ENCODE measurements at regions of chr6 and their contacts with region 1.

Region 1: GRCh38 chr6:12011276-12012076 is 636 bp upstream of the HIVEP1 start:
- DNase-seq: peak; percentile 83 to 99 (median 94)
- ATAC-seq: peak; percentile 83
- H3K4me3 ChIP-seq: no peak overlapping the region
- H3K4me3 Mint-ChIP-seq: peak overlapping the region; percentile 91 to 99 (median 94)
- H3K27ac ChIP-seq: peak overlapping the region; percentile 73
- H3K27ac Mint-ChIP-seq: peak overlapping the region; percentile 97 to 100 (median 98)
- H3K4me1 ChIP-seq: peaks cover 14 to 26% of the 10 kb centered on the region in 2 donors
- H3K4me1 Mint-ChIP-seq: peaks cover 15 to 68% (median 58%) of the 10 kb centered on the region in 7 donors
- H3K27me3 ChIP-seq: no peaks in the 10 kb centered on the region
- H3K27me3 Mint-ChIP-seq: peaks cover 0 to 5% (median 0%) of the 10 kb centered on the region in 5 donors

Region 2: DNA sequence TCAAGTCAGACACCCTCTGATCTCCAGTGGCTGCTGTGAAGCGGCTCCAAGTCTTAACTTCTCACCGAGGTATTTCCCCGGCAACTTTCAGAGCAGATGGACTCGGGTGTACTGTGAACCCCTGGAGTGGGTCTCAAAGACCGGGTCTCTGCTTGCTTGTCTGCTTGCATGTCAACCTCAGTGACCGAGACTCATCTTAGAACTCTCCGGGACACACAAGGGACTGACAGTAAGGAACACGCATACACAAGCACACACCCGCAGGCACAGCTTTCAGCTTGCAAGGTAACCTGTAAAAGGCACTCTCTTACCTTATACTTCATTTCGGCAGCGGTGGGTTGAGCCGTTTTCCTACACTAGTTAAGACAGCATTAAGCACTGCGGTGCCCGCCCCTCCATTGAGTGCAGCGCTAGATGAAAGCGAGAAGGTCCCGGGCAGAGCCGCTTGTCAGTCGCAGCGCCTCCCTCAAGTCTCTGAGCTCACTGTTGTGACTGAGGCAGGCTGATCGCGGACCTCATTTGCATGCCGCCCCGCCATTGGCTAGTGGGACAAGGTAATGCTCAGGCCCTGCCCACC is 779.2 kb before region 1 on chr6 and contains the start of gene NEDD9:
- CTCF ChIA-PET with region 1: no interaction called
- POLR2A ChIA-PET with region 1: no interaction called
- intact Hi-C with region 1: loop called (anchors 1 kb)
- DNase-seq: peak; percentile 76 to 97 (median 90)
- ATAC-seq: peak; percentile 97
- H3K4me3 ChIP-seq: peak within 1 kb of the TSS; percentile 69
- H3K4me3 Mint-ChIP-seq: peak within 1 kb of the TSS; percentile 86 to 98 (median 94)
- H3K27ac ChIP-seq: peak within 1 kb of the TSS; percentile 76
- H3K27ac Mint-ChIP-seq: peak within 1 kb of the TSS; percentile 88 to 99 (median 98)
- H3K4me1 ChIP-seq: peaks cover 19 to 26% of the 10 kb centered on the region in 2 donors
- H3K4me1 Mint-ChIP-seq: peaks cover 32 to 78% (median 46%) of the 10 kb centered on the region in 7 donors
- H3K27me3 ChIP-seq: no peaks in the 10 kb centered on the region
- H3K27me3 Mint-ChIP-seq: no peaks in the 10 kb centered on the region
- total RNA-seq, gene NEDD9: 29.4 to 62.9 (median 40.2) TPM

Region 3: DNA sequence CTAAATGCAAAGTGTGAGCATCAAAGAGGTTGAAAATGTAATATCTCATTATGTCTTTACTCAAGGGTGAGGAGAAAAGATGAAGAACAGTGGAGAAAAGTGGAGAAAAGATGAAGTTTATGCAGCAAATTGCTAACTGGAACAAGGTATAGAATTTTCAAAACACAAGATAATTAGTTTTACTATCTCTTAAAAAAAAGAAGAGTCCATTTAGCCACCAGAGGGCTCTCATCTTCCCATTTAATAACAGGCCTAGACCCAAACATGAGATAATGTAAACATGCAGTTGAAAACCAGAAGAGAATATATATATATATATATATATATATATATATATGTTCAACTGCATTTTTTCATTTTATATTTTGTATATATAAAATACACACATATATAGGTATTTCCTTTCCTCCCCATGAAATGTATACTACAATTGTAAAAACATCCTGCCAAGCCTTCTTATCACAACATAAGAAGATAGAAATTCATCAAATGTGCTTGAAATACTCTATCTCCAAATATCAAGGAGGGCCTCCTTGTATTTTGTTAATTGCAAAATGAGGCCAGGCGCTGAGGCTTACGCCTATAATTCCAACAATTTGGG is 311.3 kb before region 1 on chr6:
- CTCF ChIA-PET with region 1: interaction called, 4 read pairs
- POLR2A ChIA-PET with region 1: interaction called, 3 read pairs
- intact Hi-C with region 1: loop called in 1 of 2 experiments (anchors 2 kb)
- DNase-seq: peak in 7 of 9 donors; percentile 22 to 63 (median 51)
- ATAC-seq: peak; percentile 60
- H3K4me3 ChIP-seq: no peak overlapping the region
- H3K4me3 Mint-ChIP-seq: no peak overlapping the region
- H3K27ac ChIP-seq: no peak overlapping the region
- H3K27ac Mint-ChIP-seq: peak overlapping the region in 3 of 9 donors; percentile 21 to 66 (median 41)
- H3K4me1 ChIP-seq: peaks cover 0 to 9% of the 10 kb centered on the region in 2 donors
- H3K4me1 Mint-ChIP-seq: peaks cover 10 to 42% (median 35%) of the 10 kb centered on the region in 7 donors
- H3K27me3 ChIP-seq: no peaks in the 10 kb centered on the region
- H3K27me3 Mint-ChIP-seq: no peaks in the 10 kb centered on the region

Region 4: DNA sequence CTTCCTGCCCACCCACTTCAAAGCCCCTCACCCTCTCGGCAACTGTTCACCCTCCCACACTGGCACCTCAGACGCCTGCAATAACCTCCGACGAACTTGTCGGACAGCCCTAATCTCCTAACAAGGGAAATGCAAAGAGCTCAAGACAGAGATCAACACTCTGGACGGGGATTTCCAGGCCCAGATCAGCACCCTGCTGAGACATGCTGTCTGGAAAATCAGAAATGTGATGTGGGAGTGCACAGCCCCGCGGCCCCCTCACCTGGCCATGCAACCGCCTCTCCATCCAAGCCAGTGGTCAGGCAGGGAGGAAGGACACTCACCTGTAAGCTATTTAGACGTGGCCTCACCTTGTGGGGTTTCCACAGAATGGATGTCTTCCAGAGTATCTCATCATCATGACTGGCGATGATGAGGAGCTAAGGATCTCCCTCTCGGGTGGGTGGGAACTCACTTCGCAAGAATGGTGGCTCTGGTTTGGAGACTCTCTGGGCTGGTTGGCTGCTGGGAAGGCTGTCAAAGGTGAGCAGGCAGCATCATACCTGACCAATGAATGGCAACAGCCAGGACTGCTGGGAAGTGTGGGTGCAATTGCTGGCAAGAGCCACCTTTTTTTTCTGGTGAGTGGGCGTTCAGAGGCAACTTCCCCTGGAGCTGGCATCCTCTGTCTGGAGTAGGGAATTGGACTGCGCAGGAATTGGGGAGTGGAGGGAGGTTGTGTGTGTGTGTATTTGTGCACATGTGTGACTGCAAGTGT is 204.7 kb before region 1 on chr6:
- CTCF ChIA-PET with region 1: no interaction called
- POLR2A ChIA-PET with region 1: no interaction called
- intact Hi-C with region 1: no loop called
- DNase-seq: peak in 2 of 9 donors; percentile 3 to 22
- ATAC-seq: peak; percentile 44
- H3K4me3 ChIP-seq: no peak overlapping the region
- H3K4me3 Mint-ChIP-seq: peak overlapping the region in 7 of 10 donors; percentile 28 to 72 (median 42)
- H3K27ac ChIP-seq: no peak overlapping the region
- H3K27ac Mint-ChIP-seq: peak overlapping the region in 7 of 9 donors; percentile 25 to 84 (median 50)
- H3K4me1 ChIP-seq: peaks cover 0 to 6% of the 10 kb centered on the region in 2 donors
- H3K4me1 Mint-ChIP-seq: peaks cover 13 to 27% (median 17%) of the 10 kb centered on the region in 7 donors
- H3K27me3 ChIP-seq: no peaks in the 10 kb centered on the region
- H3K27me3 Mint-ChIP-seq: no peaks in the 10 kb centered on the region

Region 5: GRCh38 chr6:11938285-11938890 is 73.1 kb before region 1 on chr6:
- CTCF ChIA-PET with region 1: no interaction called
- POLR2A ChIA-PET with region 1: no interaction called
- intact Hi-C with region 1: loop called in 1 of 2 experiments (anchors 2 kb)
- DNase-seq: no peak
- ATAC-seq: no peak
- H3K4me3 ChIP-seq: no peak overlapping the region
- H3K4me3 Mint-ChIP-seq: no peak overlapping the region
- H3K27ac ChIP-seq: no peak overlapping the region
- H3K27ac Mint-ChIP-seq: no peak overlapping the region
- H3K4me1 ChIP-seq: no peaks in the 10 kb centered on the region
- H3K4me1 Mint-ChIP-seq: peaks cover 0 to 11% (median 7%) of the 10 kb centered on the region in 7 donors
- H3K27me3 ChIP-seq: no peaks in the 10 kb centered on the region
- H3K27me3 Mint-ChIP-seq: no peaks in the 10 kb centered on the region

Region 6: GRCh38 chr6:12051861-12052368 is 40.4 kb after region 1 on chr6:
- CTCF ChIA-PET with region 1: interaction called, 5 read pairs
- POLR2A ChIA-PET with region 1: interaction called, 3 read pairs
- intact Hi-C with region 1: loop called (anchors 1 kb)
- DNase-seq: peak in 8 of 9 donors; percentile 46 to 83 (median 75)
- ATAC-seq: peak; percentile 98
- H3K4me3 ChIP-seq: peak overlapping the region; percentile 15
- H3K4me3 Mint-ChIP-seq: peak overlapping the region; percentile 8 to 85 (median 74)
- H3K27ac ChIP-seq: peak overlapping the region; percentile 59
- H3K27ac Mint-ChIP-seq: peak overlapping the region; percentile 70 to 93 (median 88)
- H3K4me1 ChIP-seq: peaks cover 10 to 17% of the 10 kb centered on the region in 2 donors
- H3K4me1 Mint-ChIP-seq: peaks cover 34 to 81% (median 76%) of the 10 kb centered on the region in 7 donors
- H3K27me3 ChIP-seq: no peaks in the 10 kb centered on the region
- H3K27me3 Mint-ChIP-seq: no peaks in the 10 kb centered on the region

Region 7: GRCh38 chr6:12097791-12098190 is 86.3 kb after region 1 on chr6:
- CTCF ChIA-PET with region 1: no interaction called
- POLR2A ChIA-PET with region 1: no interaction called
- intact Hi-C with region 1: no loop called
- DNase-seq: no peak
- ATAC-seq: no peak
- H3K4me3 ChIP-seq: no peak overlapping the region
- H3K4me3 Mint-ChIP-seq: no peak overlapping the region
- H3K27ac ChIP-seq: no peak overlapping the region
- H3K27ac Mint-ChIP-seq: no peak overlapping the region
- H3K4me1 ChIP-seq: peaks cover 0 to 12% of the 10 kb centered on the region in 2 donors
- H3K4me1 Mint-ChIP-seq: peaks cover 15 to 78% (median 64%) of the 10 kb centered on the region in 7 donors
- H3K27me3 ChIP-seq: no peaks in the 10 kb centered on the region
- H3K27me3 Mint-ChIP-seq: no peaks in the 10 kb centered on the region

Region 8: DNA sequence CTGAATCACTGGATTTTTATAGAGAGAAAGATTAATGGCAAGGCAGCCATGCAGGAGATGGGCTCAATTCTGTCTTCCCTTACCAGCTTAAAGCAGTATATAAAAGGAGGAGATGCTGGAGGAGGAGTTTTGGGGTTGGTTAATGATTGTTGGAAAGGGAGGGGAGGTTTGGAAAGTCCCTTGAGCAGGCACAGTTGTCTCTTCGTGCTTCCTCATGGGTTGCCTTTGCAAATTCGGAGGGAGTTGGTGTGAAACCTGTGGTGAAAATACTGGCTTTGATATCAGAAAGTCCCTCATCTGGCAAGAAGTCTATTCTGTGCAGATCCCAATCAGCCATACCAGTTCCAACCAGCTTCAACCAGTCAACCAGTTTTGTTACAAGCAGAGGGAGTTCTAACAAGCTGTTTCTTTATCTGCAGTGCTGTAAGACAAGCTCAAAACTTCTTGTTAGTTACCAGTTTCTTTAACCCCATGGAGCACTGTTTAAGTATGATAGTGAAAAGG is 107.7 kb after region 1 on chr6:
- CTCF ChIA-PET with region 1: no interaction called
- POLR2A ChIA-PET with region 1: interaction called, 5 read pairs
- intact Hi-C with region 1: loop called in 1 of 2 experiments (anchors 1 kb)
- DNase-seq: peak in 8 of 9 donors; percentile 16 to 76 (median 48)
- ATAC-seq: peak; percentile 92
- H3K4me3 ChIP-seq: no peak overlapping the region
- H3K4me3 Mint-ChIP-seq: peak overlapping the region in 8 of 10 donors; percentile 1 to 56 (median 35)
- H3K27ac ChIP-seq: no peak overlapping the region
- H3K27ac Mint-ChIP-seq: peak overlapping the region; percentile 28 to 85 (median 68)
- H3K4me1 ChIP-seq: peaks cover 9 to 21% of the 10 kb centered on the region in 2 donors
- H3K4me1 Mint-ChIP-seq: peaks cover 28 to 81% (median 70%) of the 10 kb centered on the region in 7 donors
- H3K27me3 ChIP-seq: no peaks in the 10 kb centered on the region
- H3K27me3 Mint-ChIP-seq: no peaks in the 10 kb centered on the region

Region 9: DNA sequence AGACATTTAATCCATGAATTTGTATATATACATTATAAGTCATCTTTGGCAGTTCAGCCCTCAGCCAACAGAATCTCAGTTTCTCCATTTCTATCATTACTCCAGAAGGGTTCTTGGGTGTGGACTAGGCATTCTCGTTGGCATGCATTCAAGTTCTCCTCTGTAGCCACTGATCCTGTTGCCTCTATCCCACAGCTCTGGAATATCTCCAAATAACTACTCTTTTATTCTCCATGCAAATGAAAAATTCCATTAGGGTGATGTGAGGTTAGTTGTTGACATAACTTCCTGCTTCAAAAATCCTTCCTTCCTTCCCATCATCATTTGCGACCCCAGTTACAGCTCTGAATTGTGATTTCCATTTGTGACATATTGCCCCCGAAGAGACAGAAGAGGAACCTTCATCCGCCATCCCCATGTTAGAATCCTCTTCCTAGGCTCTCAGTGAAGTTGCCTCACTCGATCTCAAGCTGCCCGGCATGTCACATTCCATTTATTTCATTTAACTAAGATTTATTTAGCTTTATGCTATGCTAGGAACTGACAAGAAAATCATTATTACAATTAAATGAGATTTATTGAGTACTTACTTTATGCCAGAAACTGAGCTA is 185.0 kb after region 1 on chr6:
- CTCF ChIA-PET with region 1: no interaction called
- POLR2A ChIA-PET with region 1: no interaction called
- intact Hi-C with region 1: no loop called
- DNase-seq: no peak
- ATAC-seq: no peak
- H3K4me3 ChIP-seq: no peak overlapping the region
- H3K4me3 Mint-ChIP-seq: no peak overlapping the region
- H3K27ac ChIP-seq: no peak overlapping the region
- H3K27ac Mint-ChIP-seq: no peak overlapping the region
- H3K4me1 ChIP-seq: no peaks in the 10 kb centered on the region
- H3K4me1 Mint-ChIP-seq: no peaks in the 10 kb centered on the region
- H3K27me3 ChIP-seq: no peaks in the 10 kb centered on the region
- H3K27me3 Mint-ChIP-seq: peaks cover 0 to 2% (median 0%) of the 10 kb centered on the region in 5 donors

Measured in naive thymus-derived CD4-positive, alpha-beta T cell (primary cell).